ENCODE measurements at regions of chr3 and their contacts with region 1.

Region 1: GRCh38 chr3:185498503-185499396 is at the start of gene TMEM41A:
- DNase-seq: peak; percentile 89 to 99 (median 94)

Region 2: DNA sequence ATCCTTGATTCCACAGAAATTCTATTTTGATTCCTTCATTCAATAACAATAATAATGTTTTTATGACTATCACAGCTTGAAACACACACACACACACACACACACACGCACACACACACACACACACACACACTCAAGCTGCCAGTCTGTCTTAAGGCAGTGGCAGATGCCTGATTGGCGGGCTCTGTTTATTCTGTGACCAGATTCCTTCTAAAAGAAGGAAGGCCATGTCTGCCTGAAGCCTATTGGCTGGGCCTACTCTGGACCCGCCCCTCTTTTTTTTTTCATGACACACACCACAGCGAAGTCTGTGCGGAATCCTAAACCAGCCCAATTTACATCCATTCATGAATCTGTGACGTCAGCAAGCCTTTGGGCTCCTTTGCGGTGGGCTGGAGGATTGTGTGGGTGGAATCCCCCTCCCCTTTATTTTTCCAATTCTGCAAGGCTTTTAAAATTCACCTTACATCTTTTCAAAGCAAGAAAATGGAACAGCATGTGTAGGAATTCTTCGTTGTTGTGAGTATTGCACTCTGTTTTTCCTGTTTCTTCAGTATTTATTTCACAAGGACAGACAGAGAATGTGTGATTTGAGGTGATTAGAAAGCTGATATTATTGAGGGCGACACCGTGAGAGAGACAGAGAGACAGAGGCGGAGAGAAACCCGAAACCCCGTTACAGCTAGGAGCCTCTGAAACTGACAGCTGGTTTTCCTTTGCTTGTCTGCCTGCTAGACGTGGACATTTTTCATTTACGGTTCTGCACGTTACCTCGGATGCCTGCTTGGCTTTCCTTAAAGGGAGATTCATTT is 135.7 kb before region 1 on chr3 and contains the start of gene MAP3K13:
- intact Hi-C with region 1: loop called (anchors 5 kb)
- DNase-seq: peak; percentile 61 to 96 (median 75)

Region 3: DNA sequence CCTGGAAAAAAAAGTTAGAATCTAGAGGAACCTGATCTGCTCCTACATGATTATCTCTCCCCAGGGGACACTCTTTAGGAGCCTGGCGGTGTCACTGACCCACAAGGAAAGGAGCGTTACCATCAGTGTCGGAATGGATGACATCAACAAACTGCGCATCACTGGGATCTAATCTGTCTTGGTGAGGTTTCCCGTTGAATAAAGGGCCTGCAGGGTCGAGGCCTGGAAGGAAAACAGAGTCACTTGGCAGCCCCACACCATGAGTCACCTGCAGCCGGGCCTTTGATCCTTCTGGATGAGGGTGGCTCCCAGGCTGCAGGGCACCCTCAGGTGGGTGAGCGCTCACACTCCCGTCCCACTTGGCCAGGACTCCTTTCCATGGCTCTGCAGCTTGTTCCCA is 28.6 kb after region 1 on chr3:
- intact Hi-C with region 1: no loop called
- DNase-seq: no peak

Region 4: GRCh38 chr3:185552358-185552877 is 53.7 kb after region 1 on chr3 and contains the start of gene LIPH:
- intact Hi-C with region 1: loop called (anchors 10 kb)
- DNase-seq: no peak